Vagina (tissue), 2 donors: ENCODE measurements at regions of chr4 and their contacts with region 1.

Region 1: DNA sequence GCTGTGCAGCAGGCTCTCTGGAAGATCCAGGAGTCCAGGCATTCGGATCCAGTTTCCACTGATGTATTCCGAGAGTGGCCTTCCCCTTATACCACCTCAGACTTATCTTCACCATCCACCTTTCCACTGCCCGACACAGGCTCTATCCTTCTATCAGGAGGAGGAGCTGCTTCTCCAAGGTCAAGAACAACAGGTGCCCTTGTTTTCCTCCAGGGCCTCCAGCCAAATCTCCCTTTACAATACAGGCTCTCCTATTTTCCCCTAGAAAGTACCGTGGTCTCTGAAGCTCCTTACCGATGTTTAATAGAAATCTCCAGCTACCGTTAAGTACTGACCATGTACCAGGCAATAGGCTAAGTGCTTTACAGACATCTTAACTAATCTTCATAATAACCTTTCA is 61.3 kb downstream of the AFAP1 start:
- DNase-seq: no peak
- H3K4me3 ChIP-seq: no peak overlapping the region
- H3K27ac ChIP-seq: no peak overlapping the region
- H3K4me1 ChIP-seq: peaks cover 28% of the 10 kb centered on the region
- H3K27me3 ChIP-seq: no peaks in the 10 kb centered on the region
- CTCF ChIP-seq: no peak
- POLR2A ChIP-seq: no peak

Region 2: GRCh38 chr4:7823416-7823824 is 54.9 kb before region 1 on chr4:
- intact Hi-C with region 1: loop called (anchors 2 kb)
- DNase-seq: no peak
- H3K4me3 ChIP-seq: no peak overlapping the region
- H3K27ac ChIP-seq: peak overlapping the region; percentile 81
- H3K4me1 ChIP-seq: peaks cover 41% of the 10 kb centered on the region
- H3K27me3 ChIP-seq: no peaks in the 10 kb centered on the region
- CTCF ChIP-seq: no peak
- POLR2A ChIP-seq: no peak

Region 3: DNA sequence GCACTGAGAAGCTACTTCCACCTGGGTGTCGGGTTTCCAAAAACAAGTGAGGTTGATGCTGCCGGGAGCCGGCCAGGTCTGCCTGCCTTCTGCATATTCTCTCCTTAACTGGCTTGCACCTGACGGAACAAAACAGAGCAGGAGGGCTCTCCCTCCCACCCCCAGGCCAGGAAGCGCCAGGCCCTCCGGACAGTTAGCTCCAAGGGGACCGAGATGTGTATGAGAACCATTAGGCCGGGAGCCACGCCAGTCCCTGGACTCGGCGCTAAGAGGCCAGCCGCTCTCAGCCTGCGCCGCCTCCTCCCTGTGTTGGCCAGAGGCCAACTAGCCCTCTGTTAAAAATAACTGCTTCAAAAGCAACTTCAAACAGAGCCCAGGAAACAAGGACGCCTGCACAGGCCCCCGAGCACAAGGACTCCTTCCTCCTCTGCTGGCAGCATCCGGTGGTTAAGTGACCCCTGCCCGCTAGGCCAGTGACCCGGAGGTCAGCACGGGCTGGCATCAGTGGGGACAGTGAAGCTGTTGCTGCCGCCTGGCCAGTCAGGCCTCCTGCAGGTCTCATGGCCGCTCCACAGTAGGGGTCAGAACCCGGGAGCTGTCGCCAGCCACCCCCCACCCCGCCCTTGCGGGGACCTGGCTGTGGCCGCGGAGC is 172.4 kb after region 1 on chr4:
- intact Hi-C with region 1: no loop called
- DNase-seq: no peak
- H3K4me3 ChIP-seq: no peak overlapping the region
- H3K27ac ChIP-seq: peak overlapping the region; percentile 53
- H3K4me1 ChIP-seq: peaks cover 15% of the 10 kb centered on the region
- H3K27me3 ChIP-seq: no peaks in the 10 kb centered on the region
- CTCF ChIP-seq: no peak
- POLR2A ChIP-seq: no peak

Region 4: DNA sequence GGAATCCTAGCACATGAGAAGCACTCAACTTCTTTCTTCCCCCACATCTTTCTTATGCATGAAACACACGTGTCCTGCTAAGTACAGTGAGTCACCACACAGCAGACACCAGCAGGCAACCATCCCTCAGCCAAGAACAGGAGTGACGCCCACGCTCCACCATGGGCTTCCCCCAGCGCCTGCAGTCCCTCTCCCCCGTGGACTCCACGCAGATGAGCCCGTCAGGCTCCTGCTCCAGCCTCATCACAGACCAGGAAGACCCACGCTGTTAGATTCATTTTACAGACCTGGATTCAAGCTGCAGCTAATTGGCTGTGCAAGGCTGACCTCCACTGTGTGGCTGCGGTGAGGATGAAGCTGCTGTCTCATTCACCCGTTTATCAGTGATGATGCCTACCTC is 976.6 kb after region 1 on chr4:
- intact Hi-C with region 1: no loop called
- DNase-seq: no peak
- H3K4me3 ChIP-seq: no peak overlapping the region
- H3K27ac ChIP-seq: no peak overlapping the region
- H3K4me1 ChIP-seq: peaks cover 22% of the 10 kb centered on the region
- H3K27me3 ChIP-seq: peaks cover 4% of the 10 kb centered on the region
- CTCF ChIP-seq: no peak
- POLR2A ChIP-seq: no peak